ENCODE measurements at regions of chr3 and their contacts with region 1.

Region 1: GRCh38 chr3:183447206-183448001 is 19.0 kb upstream of the MCF2L2 start:
- DNase-seq: peak; percentile 92
- H3K4me3 Mint-ChIP-seq: peak overlapping the region; percentile 70
- H3K27ac Mint-ChIP-seq: peak overlapping the region; percentile 80
- H3K4me1 Mint-ChIP-seq: peaks cover 15% of the 10 kb centered on the region
- H3K27me3 Mint-ChIP-seq: peaks cover 11% of the 10 kb centered on the region
- CTCF ChIP-seq: no peak

Region 2: DNA sequence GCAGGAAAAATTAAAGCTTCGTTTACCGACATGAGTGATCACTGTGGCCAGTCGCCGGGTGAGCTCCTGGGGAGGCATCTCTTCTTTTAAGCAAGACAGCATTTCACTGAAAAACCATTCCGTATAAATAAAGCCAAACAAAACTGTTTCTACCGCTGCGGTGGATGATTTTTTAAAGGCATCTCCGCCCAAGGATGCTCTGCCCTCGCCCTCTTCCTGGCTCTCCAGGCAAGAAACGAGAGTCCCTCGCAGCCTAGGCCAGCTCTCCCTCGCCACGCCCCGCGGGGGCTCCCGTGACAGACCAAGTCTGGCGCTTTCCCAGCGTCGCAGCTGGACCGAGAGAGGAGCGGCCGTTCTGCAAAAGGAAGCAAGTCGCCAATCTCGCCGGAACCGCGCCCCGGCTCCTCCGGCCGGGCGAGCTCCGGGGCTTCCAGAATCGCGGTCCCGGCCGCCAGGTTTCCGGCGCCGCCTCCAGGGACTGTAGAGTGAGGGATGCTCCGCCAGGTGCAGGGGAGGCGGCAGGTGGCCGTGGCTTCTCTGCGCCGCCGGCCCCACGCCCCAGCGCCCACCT is 19.4 kb before region 1 on chr3:
- CTCF ChIA-PET with region 1: no interaction called
- POLR2A ChIA-PET with region 1: interaction called, 10 read pairs
- intact Hi-C with region 1: no loop called
- DNase-seq: peak; percentile 33
- H3K4me3 Mint-ChIP-seq: peak overlapping the region; percentile 71
- H3K27ac Mint-ChIP-seq: no peak overlapping the region
- H3K4me1 Mint-ChIP-seq: no peaks in the 10 kb centered on the region
- H3K27me3 Mint-ChIP-seq: peaks cover 12% of the 10 kb centered on the region
- CTCF ChIP-seq: no peak

Measured in MCF 10A (cell line).